ENCODE measurements at regions of chr6 and their contacts with region 1.

Region 1: GRCh38 chr6:144411332-144412190 is 126.4 kb downstream of the UTRN start:
- DNase-seq: peak in 1 of 2 donors; percentile 28
- ATAC-seq: peak; percentile 46 to 59 (median 54)
- H3K4me3 ChIP-seq: no peak overlapping the region
- H3K4me3 Mint-ChIP-seq: peak overlapping the region; percentile 83
- H3K27ac ChIP-seq: no peak overlapping the region
- H3K27ac Mint-ChIP-seq: peak overlapping the region; percentile 84 to 91
- H3K4me1 ChIP-seq: peaks cover 26% of the 10 kb centered on the region
- H3K4me1 Mint-ChIP-seq: peaks cover 81 to 86% of the 10 kb centered on the region in 2 donors
- H3K27me3 ChIP-seq: no peaks in the 10 kb centered on the region
- H3K27me3 Mint-ChIP-seq: no peaks in the 10 kb centered on the region
- CTCF ChIP-seq: no peak

Region 2: GRCh38 chr6:144349690-144350527 is 61.7 kb before region 1 on chr6:
- intact Hi-C with region 1: loop called (anchors 5 kb)
- DNase-seq: peak in 1 of 2 donors; percentile 60
- ATAC-seq: peak; percentile 32 to 62 (median 32)
- H3K4me3 ChIP-seq: peak overlapping the region; percentile 17
- H3K4me3 Mint-ChIP-seq: peak overlapping the region; percentile 92
- H3K27ac ChIP-seq: peak overlapping the region; percentile 87
- H3K27ac Mint-ChIP-seq: peak overlapping the region; percentile 90 to 99
- H3K4me1 ChIP-seq: peaks cover 83% of the 10 kb centered on the region
- H3K4me1 Mint-ChIP-seq: peaks cover 81 to 90% of the 10 kb centered on the region in 2 donors
- H3K27me3 ChIP-seq: no peaks in the 10 kb centered on the region
- H3K27me3 Mint-ChIP-seq: no peaks in the 10 kb centered on the region
- CTCF ChIP-seq: no peak

Region 3: GRCh38 chr6:144377586-144378210 is 33.9 kb before region 1 on chr6:
- intact Hi-C with region 1: loop called (anchors 5 kb)
- DNase-seq: no peak
- ATAC-seq: peak; percentile 61 to 76 (median 62)
- H3K4me3 ChIP-seq: no peak overlapping the region
- H3K4me3 Mint-ChIP-seq: peak overlapping the region; percentile 17
- H3K27ac ChIP-seq: no peak overlapping the region
- H3K27ac Mint-ChIP-seq: peak overlapping the region; percentile 21 to 81
- H3K4me1 ChIP-seq: peaks cover 41% of the 10 kb centered on the region
- H3K4me1 Mint-ChIP-seq: peaks cover 70 to 79% of the 10 kb centered on the region in 2 donors
- H3K27me3 ChIP-seq: no peaks in the 10 kb centered on the region
- H3K27me3 Mint-ChIP-seq: no peaks in the 10 kb centered on the region
- CTCF ChIP-seq: no peak

Measured in natural killer cell (primary cell).